ENCODE measurements at regions of chr1 and their contacts with region 1.

Region 1: DNA sequence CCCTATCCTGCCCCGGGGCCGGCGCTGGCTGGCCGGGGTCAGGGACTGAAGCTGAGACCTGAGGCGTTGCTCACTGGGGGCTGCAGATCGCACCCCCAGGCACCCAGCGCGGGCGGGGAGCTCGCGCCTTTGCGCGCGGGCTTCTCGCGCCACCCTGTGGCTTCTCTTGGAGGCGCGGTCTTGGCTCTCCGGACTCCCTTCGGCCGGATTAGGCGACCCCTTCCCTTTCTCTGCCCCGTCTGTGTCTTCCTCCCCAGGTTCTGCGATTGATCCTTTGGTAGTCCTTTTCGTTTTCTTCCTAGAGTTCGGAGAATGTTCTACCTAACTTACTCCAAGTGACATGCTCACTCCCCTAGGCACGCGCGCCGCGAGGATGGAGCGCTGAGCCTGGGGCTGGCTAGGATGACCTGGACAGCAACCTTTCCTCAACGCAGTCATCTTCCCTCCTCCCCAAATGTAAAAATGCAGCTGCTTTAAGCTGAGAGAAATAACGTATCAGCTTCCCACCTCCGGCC is 495 bp upstream of the NTRK1 start:
- DNase-seq: no peak
- H3K4me3 ChIP-seq: peak overlapping the region; percentile 30
- H3K27me3 ChIP-seq: peaks cover 56% of the 10 kb centered on the region
- CTCF ChIP-seq: peak; percentile 84

Region 2: DNA sequence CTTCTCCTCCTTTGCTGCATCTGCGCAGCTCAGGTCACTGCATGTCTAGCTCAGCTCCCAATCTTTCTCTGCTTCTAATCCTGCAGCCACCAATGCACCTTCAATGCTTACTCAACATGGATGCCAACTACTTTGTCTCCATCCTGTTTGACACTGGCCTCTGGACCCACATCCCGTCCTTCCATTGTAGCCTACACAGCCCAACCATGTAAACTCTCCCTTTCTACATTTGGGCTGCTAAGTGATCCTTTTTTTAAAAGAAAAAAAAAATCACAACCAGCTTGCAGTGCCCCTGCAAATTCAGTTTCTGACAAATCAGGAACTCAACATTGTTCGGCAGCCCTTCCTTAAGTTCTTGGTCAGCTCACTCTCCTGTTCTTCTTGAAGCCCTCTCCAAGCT is 145.3 kb before region 1 on chr1:
- CTCF ChIA-PET with region 1: interaction called, 12 read pairs
- POLR2A ChIA-PET with region 1: no interaction called
- DNase-seq: no peak
- H3K4me3 ChIP-seq: no peak overlapping the region
- H3K27me3 ChIP-seq: no peaks in the 10 kb centered on the region
- CTCF ChIP-seq: no peak

Region 3: DNA sequence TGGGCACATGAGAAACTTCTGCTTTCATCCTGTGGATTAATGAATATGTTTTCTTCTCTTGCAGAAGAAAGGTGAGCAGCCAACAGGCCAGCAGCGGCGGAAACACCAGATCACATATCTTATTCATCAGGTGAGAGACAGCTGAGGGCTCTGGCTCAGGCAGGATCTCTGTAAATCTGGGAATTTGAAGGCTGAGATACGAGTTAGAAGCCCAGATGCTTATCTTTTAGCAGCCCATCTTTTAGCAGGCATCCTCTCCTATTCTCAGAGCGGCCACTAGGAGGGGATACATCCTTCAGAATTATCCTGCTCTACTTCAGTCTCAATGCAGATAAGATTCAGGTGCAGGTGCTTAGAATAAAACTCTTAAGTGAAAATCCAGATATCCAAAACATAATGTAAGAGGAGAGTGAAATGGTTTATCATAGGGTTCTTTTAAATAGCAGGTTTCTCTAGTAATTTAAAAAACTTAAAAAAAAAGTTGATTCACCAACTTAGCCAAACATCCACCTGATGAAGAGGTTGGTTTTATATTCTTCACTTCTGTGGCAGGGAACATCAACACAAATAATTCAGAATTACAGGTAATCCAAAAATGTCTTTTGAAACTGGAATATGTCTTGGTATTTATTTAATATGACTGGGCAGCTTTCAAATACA is 62.8 kb before region 1 on chr1:
- CTCF ChIA-PET with region 1: interaction called, 290 read pairs
- POLR2A ChIA-PET with region 1: interaction called, 3 read pairs
- DNase-seq: no peak
- H3K4me3 ChIP-seq: no peak overlapping the region
- H3K27me3 ChIP-seq: no peaks in the 10 kb centered on the region
- CTCF ChIP-seq: peak; percentile 85

Region 4: GRCh38 chr1:156813750-156814570 is 46.2 kb before region 1 on chr1:
- CTCF ChIA-PET with region 1: interaction called, 37 read pairs
- POLR2A ChIA-PET with region 1: no interaction called
- DNase-seq: no peak
- H3K4me3 ChIP-seq: peak overlapping the region; percentile 12; the same call in 1 of the 2 replicates
- H3K27me3 ChIP-seq: no peaks in the 10 kb centered on the region; the same call in 1 of the 2 replicates
- CTCF ChIP-seq: peak; percentile 75

Region 5: DNA sequence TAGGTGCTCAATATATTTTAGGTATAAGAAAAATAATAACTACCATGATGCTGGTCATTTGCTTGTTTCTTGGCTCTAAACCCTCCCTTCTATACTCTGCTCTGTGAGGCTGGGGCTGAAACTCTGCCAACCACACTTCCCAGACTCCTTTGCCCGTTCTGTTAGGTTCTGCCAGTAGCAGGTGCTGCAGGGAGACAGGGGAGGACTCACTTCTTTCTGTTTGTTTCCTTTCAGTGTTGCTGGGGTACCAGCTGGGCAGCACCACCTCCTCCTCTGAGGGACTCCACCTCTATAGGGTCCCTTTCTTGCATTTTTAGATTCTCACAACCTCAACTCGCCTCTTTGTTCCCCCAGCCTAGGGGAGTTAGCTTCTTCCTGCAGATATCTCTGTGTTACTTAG is 26.6 kb before region 1 on chr1:
- CTCF ChIA-PET with region 1: interaction called, 174 read pairs
- POLR2A ChIA-PET with region 1: no interaction called
- DNase-seq: no peak
- H3K4me3 ChIP-seq: no peak overlapping the region
- H3K27me3 ChIP-seq: peaks cover 34% of the 10 kb centered on the region
- CTCF ChIP-seq: no peak

Region 6: GRCh38 chr1:156876281-156876680 is 16.1 kb after region 1 on chr1:
- CTCF ChIA-PET with region 1: interaction called, 33 read pairs
- POLR2A ChIA-PET with region 1: no interaction called
- DNase-seq: no peak
- H3K4me3 ChIP-seq: no peak overlapping the region
- H3K27me3 ChIP-seq: peaks cover 19% of the 10 kb centered on the region
- CTCF ChIP-seq: no peak

Region 7: DNA sequence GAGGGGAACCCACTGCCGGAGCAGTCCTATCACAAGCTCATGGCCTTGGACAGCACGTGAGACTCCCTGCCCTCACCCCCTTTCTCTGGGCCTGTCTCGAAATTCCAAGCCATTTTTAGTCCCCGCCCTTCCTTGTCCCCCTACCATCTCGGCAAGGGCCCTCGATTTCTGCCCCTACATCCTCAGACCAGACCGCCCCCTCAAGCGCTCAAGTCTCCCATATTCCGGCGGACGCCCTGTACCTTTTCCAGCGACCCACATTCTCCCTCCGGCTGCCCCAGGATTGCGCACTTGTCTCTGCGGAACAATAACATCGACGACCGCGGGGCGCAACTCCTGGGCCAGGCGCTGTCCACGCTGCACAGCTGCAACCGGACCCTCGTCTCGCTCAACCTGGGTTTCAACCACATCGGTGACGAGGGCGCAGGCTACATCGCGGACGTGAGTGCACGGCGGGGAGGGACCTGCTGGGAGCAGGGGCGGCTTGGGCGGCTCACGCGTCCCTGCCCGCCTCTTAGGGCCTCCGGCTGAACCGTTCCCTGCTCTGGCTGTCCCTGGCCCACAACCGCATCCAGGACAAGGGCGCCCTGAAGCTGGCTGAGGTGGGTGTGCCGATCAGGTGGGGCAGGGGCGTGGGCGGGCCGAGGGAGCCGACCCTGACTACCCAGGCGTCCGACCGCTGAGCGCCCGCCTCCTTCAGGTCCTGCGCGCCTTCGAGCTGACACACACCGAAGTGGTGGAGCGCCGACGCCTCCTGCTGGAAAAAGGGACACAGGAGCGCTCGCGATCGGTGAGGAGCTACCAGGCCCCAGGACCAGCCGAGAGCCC is 67.3 kb after region 1 on chr1:
- CTCF ChIA-PET with region 1: interaction called, 20 read pairs
- POLR2A ChIA-PET with region 1: interaction called, 12 read pairs
- DNase-seq: no peak
- H3K4me3 ChIP-seq: peak overlapping the region; percentile 32
- H3K27me3 ChIP-seq: peaks cover 12% of the 10 kb centered on the region
- CTCF ChIP-seq: peak; percentile 89

Region 8: DNA sequence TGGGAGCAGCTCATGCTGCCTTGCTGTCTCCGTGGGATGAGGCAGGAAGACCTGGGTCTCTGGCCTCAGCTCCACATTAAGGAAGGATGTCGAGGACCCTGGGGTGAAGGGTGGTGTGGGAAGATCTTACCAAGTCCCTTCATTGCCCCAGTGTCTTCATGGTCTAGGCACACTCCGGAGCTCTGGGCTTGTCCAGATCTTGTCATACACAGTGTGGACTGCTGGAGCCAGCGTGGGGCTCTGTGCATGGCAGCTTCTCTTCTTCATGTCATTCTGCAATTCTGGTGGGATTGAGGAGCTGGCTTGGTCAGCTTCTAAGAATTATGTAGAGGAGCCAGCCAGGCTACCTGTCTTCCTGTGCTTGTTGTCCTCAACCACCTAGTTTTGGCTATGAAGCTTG is 357.3 kb after region 1 on chr1:
- CTCF ChIA-PET with region 1: no interaction called
- POLR2A ChIA-PET with region 1: no interaction called
- DNase-seq: no peak
- H3K4me3 ChIP-seq: no peak overlapping the region
- H3K27me3 ChIP-seq: no peaks in the 10 kb centered on the region
- CTCF ChIP-seq: no peak

Measured in BJ (cell line).